SK-N-SH (cell line): ENCODE measurements at regions of chr10 and their contacts with region 1.

Region 1: GRCh38 chr10:49518982-49519578 is 19.8 kb downstream of the ERCC6 start:
- DNase-seq: peak; percentile 67
- H3K4me3 ChIP-seq: no peak overlapping the region; a peak in 1 of 4 replicates
- H3K27ac ChIP-seq: no peak overlapping the region
- H3K4me1 ChIP-seq: no peaks in the 10 kb centered on the region; a peak in 1 of 4 replicates
- H3K27me3 ChIP-seq: no peaks in the 10 kb centered on the region
- CTCF ChIP-seq: peak; percentile 77
- EP300 ChIP-seq: no peak
- RAD21 ChIP-seq: peak; percentile 87

Region 2: GRCh38 chr10:49272251-49273081 is 246.6 kb before region 1 on chr10:
- CTCF ChIA-PET with region 1: no interaction called
- POLR2A ChIA-PET with region 1: no interaction called
- DNase-seq: no peak
- H3K4me3 ChIP-seq: no peak overlapping the region
- H3K27ac ChIP-seq: no peak overlapping the region
- H3K4me1 ChIP-seq: peaks cover 0 to 8% of the 10 kb centered on the region in 2 experiments; a peak in 1 of 4 replicates
- H3K27me3 ChIP-seq: no peaks in the 10 kb centered on the region
- CTCF ChIP-seq: no peak
- EP300 ChIP-seq: no peak
- RAD21 ChIP-seq: no peak

Region 3: GRCh38 chr10:49500418-49500817 is 18.7 kb before region 1 on chr10:
- CTCF ChIA-PET with region 1: interaction called, 16 read pairs
- POLR2A ChIA-PET with region 1: no interaction called
- DNase-seq: no peak
- H3K4me3 ChIP-seq: no peak overlapping the region
- H3K27ac ChIP-seq: no peak overlapping the region
- H3K4me1 ChIP-seq: peaks cover 0 to 15% of the 10 kb centered on the region in 2 experiments; a peak in 2 of 4 replicates
- H3K27me3 ChIP-seq: no peaks in the 10 kb centered on the region
- CTCF ChIP-seq: no peak
- EP300 ChIP-seq: no peak
- RAD21 ChIP-seq: no peak

Region 4: GRCh38 chr10:49532461-49532860 is 13.4 kb after region 1 on chr10:
- CTCF ChIA-PET with region 1: interaction called, 64 read pairs
- POLR2A ChIA-PET with region 1: interaction called, 3 read pairs
- DNase-seq: no peak
- H3K4me3 ChIP-seq: no peak overlapping the region
- H3K27ac ChIP-seq: no peak overlapping the region
- H3K4me1 ChIP-seq: peaks cover 4 to 18% of the 10 kb centered on the region in 2 experiments
- H3K27me3 ChIP-seq: no peaks in the 10 kb centered on the region
- CTCF ChIP-seq: no peak
- EP300 ChIP-seq: no peak
- RAD21 ChIP-seq: no peak